Ascending aorta (tissue), 2 donors: ENCODE measurements at regions of chr6 and their contacts with region 1.

Region 1: DNA sequence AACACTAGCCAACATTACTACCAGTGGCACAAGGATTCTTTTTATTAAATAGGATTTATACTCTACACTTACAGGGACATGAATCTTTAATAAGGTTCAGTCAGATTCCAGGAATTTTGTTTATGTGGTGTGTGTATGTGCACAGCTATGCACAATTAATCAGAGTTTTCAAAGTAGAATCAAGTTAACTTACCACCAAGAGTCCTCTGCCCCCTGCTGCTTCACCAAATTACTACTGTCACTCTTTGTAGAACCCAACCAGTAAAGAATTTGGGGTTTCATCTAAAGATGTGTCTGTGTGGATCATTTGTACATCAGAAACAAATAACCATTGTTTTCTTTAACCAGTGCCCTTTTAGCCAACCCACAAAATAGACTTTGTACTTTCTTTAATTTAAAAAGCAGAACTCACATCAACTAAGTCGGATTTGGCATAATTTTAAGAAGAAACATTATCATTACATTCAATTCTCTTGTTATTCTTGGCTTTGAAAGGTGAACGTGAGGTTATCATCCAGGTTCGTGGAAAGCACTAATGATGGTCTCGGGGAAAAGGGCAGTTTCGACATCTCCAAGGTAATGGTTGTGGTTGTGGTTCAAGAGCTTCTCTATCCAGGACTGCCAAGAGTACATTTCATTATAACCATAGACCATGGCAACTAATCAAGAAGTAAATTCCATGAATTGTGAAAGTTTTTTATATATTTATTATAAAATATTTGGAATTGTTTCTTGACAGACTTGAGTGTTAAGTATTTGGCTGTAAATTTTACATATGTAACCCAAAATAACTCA is 514.3 kb upstream of the ID4 start:
- DNase-seq: no peak
- H3K4me3 ChIP-seq: no peak overlapping the region
- H3K27ac ChIP-seq: peak overlapping the region in 1 of 2 donors; percentile 17
- H3K4me1 ChIP-seq: peaks cover 5 to 40% of the 10 kb centered on the region in 2 donors
- H3K27me3 ChIP-seq: no peaks in the 10 kb centered on the region
- CTCF ChIP-seq: no peak

Region 2: GRCh38 chr6:19289457-19289856 is 33.4 kb before region 1 on chr6:
- intact Hi-C with region 1: no loop called
- DNase-seq: no peak
- H3K4me3 ChIP-seq: no peak overlapping the region
- H3K27ac ChIP-seq: no peak overlapping the region
- H3K4me1 ChIP-seq: no peaks in the 10 kb centered on the region
- H3K27me3 ChIP-seq: no peaks in the 10 kb centered on the region
- CTCF ChIP-seq: no peak

Region 3: GRCh38 chr6:19410481-19410880 is 87.6 kb after region 1 on chr6:
- intact Hi-C with region 1: loop called (anchors 5 kb)
- DNase-seq: no peak
- H3K4me3 ChIP-seq: no peak overlapping the region
- H3K27ac ChIP-seq: no peak overlapping the region
- H3K4me1 ChIP-seq: peaks cover 0 to 5% of the 10 kb centered on the region in 2 donors
- H3K27me3 ChIP-seq: no peaks in the 10 kb centered on the region
- CTCF ChIP-seq: no peak

Region 4: GRCh38 chr6:19569563-19569962 is 246.7 kb after region 1 on chr6:
- intact Hi-C with region 1: no loop called
- DNase-seq: no peak
- H3K4me3 ChIP-seq: no peak overlapping the region
- H3K27ac ChIP-seq: no peak overlapping the region
- H3K4me1 ChIP-seq: no peaks in the 10 kb centered on the region
- H3K27me3 ChIP-seq: no peaks in the 10 kb centered on the region
- CTCF ChIP-seq: no peak

Region 5: DNA sequence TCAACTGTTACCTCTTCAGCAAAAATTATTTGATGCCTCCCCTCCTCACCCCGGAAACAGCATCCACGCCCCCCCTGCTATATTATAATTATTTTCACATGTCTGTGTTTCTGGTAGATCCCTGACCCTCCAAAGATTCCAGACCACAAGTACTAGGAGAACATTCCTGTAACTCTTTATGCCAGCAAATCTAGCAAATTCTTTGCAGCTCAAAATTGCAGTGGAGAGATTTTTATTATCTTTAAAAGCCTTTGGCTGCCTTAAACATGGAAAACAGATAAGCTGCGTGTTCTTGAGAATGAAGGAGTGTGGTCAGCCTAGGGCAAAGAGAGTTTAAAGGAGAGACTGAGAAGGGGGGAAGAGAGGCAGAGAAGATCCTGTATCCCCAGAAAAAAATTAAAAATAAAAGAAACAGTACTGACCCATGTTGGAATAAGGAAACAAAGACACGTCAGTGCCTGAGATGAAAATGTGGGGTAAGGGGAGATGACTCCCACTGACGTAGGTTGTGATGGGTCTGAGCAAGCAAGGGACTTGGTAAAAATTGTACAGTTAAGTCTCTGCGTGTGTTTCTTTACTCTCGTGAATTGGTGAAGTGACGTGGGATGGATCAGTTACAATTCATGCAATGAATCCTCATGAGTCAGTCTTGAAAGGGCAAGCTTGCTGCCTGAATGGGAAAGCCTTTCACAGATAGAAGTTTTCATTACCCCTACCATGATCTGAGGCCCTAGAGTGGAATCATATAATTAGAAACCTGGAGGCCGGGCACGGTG is 522.6 kb after region 1 on chr6:
- intact Hi-C with region 1: loop called (anchors 10 kb)
- DNase-seq: no peak
- H3K4me3 ChIP-seq: peak overlapping the region; percentile 13 to 24
- H3K27ac ChIP-seq: peak overlapping the region; percentile 96
- H3K4me1 ChIP-seq: peaks cover 0 to 24% of the 10 kb centered on the region in 2 donors
- H3K27me3 ChIP-seq: no peaks in the 10 kb centered on the region
- CTCF ChIP-seq: no peak